Naive thymus-derived CD4-positive, alpha-beta T cell (primary cell): ENCODE measurements at regions of chr10 and their contacts with region 1.

Region 1: DNA sequence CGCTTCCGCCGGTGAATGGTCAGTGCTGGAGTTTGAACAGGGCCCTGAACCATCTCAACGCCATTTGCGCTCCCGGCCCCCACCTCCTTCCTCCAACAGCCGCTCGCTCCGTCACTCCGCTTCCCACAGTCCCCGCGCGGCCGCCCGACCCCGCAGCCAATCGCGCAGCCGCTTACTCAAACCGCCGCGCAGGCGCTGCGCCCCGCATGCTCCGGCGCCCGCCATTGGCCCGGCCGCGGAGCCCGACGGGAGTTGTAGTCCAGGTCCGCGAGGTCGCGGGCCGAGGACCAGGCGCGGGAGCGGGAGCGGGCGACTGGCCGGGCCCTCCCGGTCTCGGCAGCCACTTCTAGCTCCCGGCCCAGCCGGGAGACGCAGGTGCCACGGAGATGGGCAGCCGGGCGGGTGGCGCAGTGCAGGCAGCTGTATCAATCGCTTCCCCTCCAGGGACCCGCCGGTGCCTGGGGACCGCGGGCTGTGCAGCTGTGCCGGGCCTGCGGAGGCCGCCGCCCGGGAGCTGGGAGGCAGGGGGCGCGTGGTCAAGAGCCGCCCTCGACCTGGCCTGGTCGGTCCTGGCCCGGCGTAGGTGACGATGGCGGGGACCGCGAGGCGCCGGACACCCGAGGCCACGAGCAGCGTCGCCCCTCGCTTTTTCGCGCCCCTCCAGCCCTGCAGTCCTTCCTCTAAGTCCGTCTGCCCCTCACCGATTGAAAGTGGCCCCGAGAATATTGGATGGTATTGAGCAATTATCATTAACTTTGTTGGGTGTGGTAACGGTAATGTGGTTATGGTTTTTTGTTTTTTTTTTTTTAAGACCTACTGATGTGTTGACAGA is at the start of gene WAPL:
- DNase-seq: peak; percentile 91 to 98 (median 94)
- ATAC-seq: peak; percentile 98
- H3K4me3 ChIP-seq: peak within 1 kb of the TSS; percentile 85
- H3K4me3 Mint-ChIP-seq: peak within 1 kb of the TSS; percentile 86 to 99 (median 96)
- H3K27ac ChIP-seq: peak within 1 kb of the TSS; percentile 97
- H3K27ac Mint-ChIP-seq: peak within 1 kb of the TSS; percentile 83 to 96 (median 94)
- H3K4me1 ChIP-seq: peaks cover 32 to 38% of the 10 kb centered on the region in 2 donors
- H3K4me1 Mint-ChIP-seq: peaks cover 41 to 75% (median 56%) of the 10 kb centered on the region in 7 donors
- H3K27me3 ChIP-seq: no peaks in the 10 kb centered on the region
- H3K27me3 Mint-ChIP-seq: no peaks in the 10 kb centered on the region
- total RNA-seq, gene WAPL: 40.3 to 59.2 (median 53.4) TPM

Region 2: DNA sequence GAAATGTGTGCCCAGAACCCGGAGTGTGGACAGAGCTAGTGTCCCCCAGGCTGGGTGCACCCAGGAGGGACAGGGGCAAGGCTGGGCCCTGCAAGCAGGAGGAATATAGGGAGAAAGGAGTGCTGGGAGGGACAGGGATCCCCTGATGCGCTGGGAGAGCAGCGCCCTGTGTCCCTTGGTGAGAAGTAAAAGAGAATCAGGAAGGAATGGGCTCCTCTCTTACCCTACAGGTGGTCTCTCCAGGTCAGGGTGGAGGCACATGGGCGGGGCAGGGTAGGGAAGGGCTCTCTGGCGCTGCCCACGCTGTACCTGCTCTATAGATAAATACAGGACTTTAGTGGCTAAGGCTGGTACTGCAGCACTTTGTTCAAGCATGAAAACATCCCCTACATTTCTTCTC is 909.1 kb before region 1 on chr10:
- CTCF ChIA-PET with region 1: no interaction called
- POLR2A ChIA-PET with region 1: no interaction called
- intact Hi-C with region 1: loop called in 1 of 2 experiments (anchors 5 kb)
- DNase-seq: peak in 4 of 9 donors; percentile 19 to 35 (median 24)
- ATAC-seq: peak; percentile 56
- H3K4me3 ChIP-seq: peak overlapping the region; percentile 44
- H3K4me3 Mint-ChIP-seq: peak overlapping the region; percentile 69 to 88 (median 78)
- H3K27ac ChIP-seq: no peak overlapping the region
- H3K27ac Mint-ChIP-seq: peak overlapping the region; percentile 54 to 94 (median 83)
- H3K4me1 ChIP-seq: peaks cover 36 to 44% of the 10 kb centered on the region in 2 donors
- H3K4me1 Mint-ChIP-seq: peaks cover 30 to 81% (median 71%) of the 10 kb centered on the region in 7 donors
- H3K27me3 ChIP-seq: no peaks in the 10 kb centered on the region
- H3K27me3 Mint-ChIP-seq: peaks cover 0 to 34% (median 0%) of the 10 kb centered on the region in 5 donors

Region 3: GRCh38 chr10:86411281-86411841 is 110.5 kb before region 1 on chr10:
- CTCF ChIA-PET with region 1: interaction called, 3 read pairs
- POLR2A ChIA-PET with region 1: interaction called, 6 read pairs
- intact Hi-C with region 1: loop called in 1 of 2 experiments (anchors 1 kb)
- DNase-seq: peak in 7 of 9 donors; percentile 22 to 38 (median 36)
- ATAC-seq: peak; percentile 70
- H3K4me3 ChIP-seq: peak overlapping the region; percentile 8
- H3K4me3 Mint-ChIP-seq: peak overlapping the region; percentile 62 to 83 (median 77)
- H3K27ac ChIP-seq: peak overlapping the region; percentile 42
- H3K27ac Mint-ChIP-seq: peak overlapping the region; percentile 84 to 94 (median 88)
- H3K4me1 ChIP-seq: peaks cover 20 to 48% of the 10 kb centered on the region in 2 donors
- H3K4me1 Mint-ChIP-seq: peaks cover 24 to 72% (median 57%) of the 10 kb centered on the region in 7 donors
- H3K27me3 ChIP-seq: no peaks in the 10 kb centered on the region
- H3K27me3 Mint-ChIP-seq: peaks cover 0 to 3% (median 0%) of the 10 kb centered on the region in 5 donors

Region 4: GRCh38 chr10:86486856-86487255 is 35.0 kb before region 1 on chr10:
- CTCF ChIA-PET with region 1: interaction called, 6 read pairs
- POLR2A ChIA-PET with region 1: no interaction called
- intact Hi-C with region 1: loop called in 1 of 2 experiments (anchors 1 kb)
- DNase-seq: no peak
- ATAC-seq: no peak
- H3K4me3 ChIP-seq: no peak overlapping the region
- H3K4me3 Mint-ChIP-seq: no peak overlapping the region
- H3K27ac ChIP-seq: no peak overlapping the region
- H3K27ac Mint-ChIP-seq: peak overlapping the region in 5 of 9 donors; percentile 21 to 81 (median 38)
- H3K4me1 ChIP-seq: no peaks in the 10 kb centered on the region
- H3K4me1 Mint-ChIP-seq: peaks cover 4 to 47% (median 21%) of the 10 kb centered on the region in 7 donors
- H3K27me3 ChIP-seq: no peaks in the 10 kb centered on the region
- H3K27me3 Mint-ChIP-seq: no peaks in the 10 kb centered on the region

Region 5: GRCh38 chr10:86535057-86535882 is 13.4 kb after region 1 on chr10:
- CTCF ChIA-PET with region 1: no interaction called
- POLR2A ChIA-PET with region 1: interaction called, 10 read pairs
- intact Hi-C with region 1: loop called (anchors 1 to 2 kb)
- DNase-seq: peak in 3 of 9 donors; percentile 10 to 31 (median 14)
- ATAC-seq: peak; percentile 55
- H3K4me3 ChIP-seq: no peak overlapping the region
- H3K4me3 Mint-ChIP-seq: peak overlapping the region; percentile 62 to 88 (median 77)
- H3K27ac ChIP-seq: no peak overlapping the region
- H3K27ac Mint-ChIP-seq: peak overlapping the region in 8 of 9 donors; percentile 36 to 93 (median 75)
- H3K4me1 ChIP-seq: peaks cover 0 to 21% of the 10 kb centered on the region in 2 donors
- H3K4me1 Mint-ChIP-seq: peaks cover 21 to 42% (median 38%) of the 10 kb centered on the region in 7 donors
- H3K27me3 ChIP-seq: no peaks in the 10 kb centered on the region
- H3K27me3 Mint-ChIP-seq: no peaks in the 10 kb centered on the region

Region 6: GRCh38 chr10:86668297-86669165 is 146.6 kb after region 1 on chr10 and contains the start of gene LDB3:
- CTCF ChIA-PET with region 1: no interaction called
- POLR2A ChIA-PET with region 1: no interaction called
- intact Hi-C with region 1: no loop called
- DNase-seq: no peak
- ATAC-seq: no peak
- H3K4me3 ChIP-seq: no peak within 1 kb of the TSS
- H3K4me3 Mint-ChIP-seq: no peak within 1 kb of the TSS
- H3K27ac ChIP-seq: no peak within 1 kb of the TSS
- H3K27ac Mint-ChIP-seq: no peak within 1 kb of the TSS
- H3K4me1 ChIP-seq: no peaks in the 10 kb centered on the region
- H3K4me1 Mint-ChIP-seq: peaks cover 0 to 3% (median 0%) of the 10 kb centered on the region in 7 donors
- H3K27me3 ChIP-seq: no peaks in the 10 kb centered on the region
- H3K27me3 Mint-ChIP-seq: no peaks in the 10 kb centered on the region
- total RNA-seq, gene LDB3: 0.13 to 0.32 TPM in 2 of 5 experiments, not detected in the others

Region 7: DNA sequence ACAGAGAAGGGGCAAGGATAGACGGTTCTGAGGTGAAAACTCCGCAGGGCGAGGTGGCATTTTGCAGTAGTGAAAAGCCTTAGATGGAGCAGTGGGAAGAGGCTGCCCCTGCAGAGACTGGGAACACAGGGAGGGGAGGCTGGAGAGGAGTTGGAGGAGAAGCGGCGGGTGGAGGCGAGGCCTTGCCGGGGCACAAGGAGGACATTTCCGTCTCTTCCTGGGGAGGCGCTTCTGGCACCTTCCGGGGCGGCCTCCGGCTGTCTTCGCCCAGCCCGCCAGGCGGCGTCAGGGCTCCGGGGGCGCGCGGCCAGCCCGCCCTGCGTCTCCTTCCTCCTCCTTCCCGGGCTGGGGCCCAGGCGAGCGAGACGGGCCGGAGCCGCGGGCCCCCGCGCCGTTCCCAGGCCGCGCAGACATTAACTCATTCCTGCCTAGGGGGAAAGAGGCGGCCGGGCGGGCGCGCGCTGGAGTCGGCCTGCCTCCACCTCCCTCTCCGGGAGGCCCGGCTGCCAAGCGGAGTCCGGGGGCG is 189.2 kb after region 1 on chr10:
- CTCF ChIA-PET with region 1: no interaction called
- POLR2A ChIA-PET with region 1: no interaction called
- intact Hi-C with region 1: loop called (anchors 2 to 5 kb)
- DNase-seq: peak; percentile 79 to 90 (median 85)
- ATAC-seq: peak; percentile 95
- H3K4me3 ChIP-seq: peak overlapping the region; percentile 73
- H3K4me3 Mint-ChIP-seq: peak overlapping the region; percentile 82 to 93 (median 88)
- H3K27ac ChIP-seq: peak overlapping the region; percentile 87
- H3K27ac Mint-ChIP-seq: peak overlapping the region; percentile 94 to 97 (median 95)
- H3K4me1 ChIP-seq: peaks cover 5 to 9% of the 10 kb centered on the region in 2 donors
- H3K4me1 Mint-ChIP-seq: peaks cover 4 to 17% (median 8%) of the 10 kb centered on the region in 7 donors
- H3K27me3 ChIP-seq: no peaks in the 10 kb centered on the region
- H3K27me3 Mint-ChIP-seq: no peaks in the 10 kb centered on the region

Region 8: GRCh38 chr10:86795353-86795752 is 273.5 kb after region 1 on chr10:
- CTCF ChIA-PET with region 1: no interaction called
- POLR2A ChIA-PET with region 1: no interaction called
- intact Hi-C with region 1: no loop called
- DNase-seq: no peak
- ATAC-seq: no peak
- H3K4me3 ChIP-seq: no peak overlapping the region
- H3K4me3 Mint-ChIP-seq: no peak overlapping the region
- H3K27ac ChIP-seq: no peak overlapping the region
- H3K27ac Mint-ChIP-seq: no peak overlapping the region
- H3K4me1 ChIP-seq: no peaks in the 10 kb centered on the region
- H3K4me1 Mint-ChIP-seq: peaks cover 0 to 19% (median 13%) of the 10 kb centered on the region in 7 donors
- H3K27me3 ChIP-seq: no peaks in the 10 kb centered on the region
- H3K27me3 Mint-ChIP-seq: peaks cover 0 to 2% (median 0%) of the 10 kb centered on the region in 5 donors

Region 9: GRCh38 chr10:86971232-86971991 is 449.5 kb after region 1 on chr10:
- CTCF ChIA-PET with region 1: no interaction called
- POLR2A ChIA-PET with region 1: no interaction called
- intact Hi-C with region 1: loop called in 1 of 2 experiments (anchors 1 kb)
- DNase-seq: peak; percentile 85 to 95 (median 90)
- ATAC-seq: peak; percentile 93
- H3K4me3 ChIP-seq: peak overlapping the region; percentile 78
- H3K4me3 Mint-ChIP-seq: peak overlapping the region; percentile 76 to 89 (median 84)
- H3K27ac ChIP-seq: peak overlapping the region; percentile 91
- H3K27ac Mint-ChIP-seq: peak overlapping the region; percentile 78 to 96 (median 92)
- H3K4me1 ChIP-seq: peaks cover 12 to 36% of the 10 kb centered on the region in 2 donors
- H3K4me1 Mint-ChIP-seq: peaks cover 19 to 47% (median 45%) of the 10 kb centered on the region in 7 donors
- H3K27me3 ChIP-seq: no peaks in the 10 kb centered on the region
- H3K27me3 Mint-ChIP-seq: peaks cover 0 to 49% (median 0%) of the 10 kb centered on the region in 5 donors